Spleen (tissue), 13 donors: ENCODE measurements at regions of chr1 and their contacts with region 1.

Region 1: GRCh38 chr1:228734881-228735801 is at the start of gene RHOU:
- DNase-seq: peak; percentile 93
- H3K4me3 ChIP-seq: peak within 1 kb of the TSS; percentile 54 to 82 (median 70)
- H3K27ac ChIP-seq: peak within 1 kb of the TSS; percentile 80 to 94 (median 91)
- H3K4me1 ChIP-seq: peaks cover 9 to 59% (median 34%) of the 10 kb centered on the region in 6 donors
- H3K27me3 ChIP-seq: peaks cover 0 to 41% (median 10%) of the 10 kb centered on the region in 7 donors
- CTCF ChIP-seq: peak in 10 of 11 experiments; percentile 5 to 95 (median 83)
- POLR2A ChIP-seq: peak in 1 of 3 donors; percentile 50
- total RNA-seq, gene RHOU: 18.9 to 55.7 (median 41.1) TPM

Region 2: DNA sequence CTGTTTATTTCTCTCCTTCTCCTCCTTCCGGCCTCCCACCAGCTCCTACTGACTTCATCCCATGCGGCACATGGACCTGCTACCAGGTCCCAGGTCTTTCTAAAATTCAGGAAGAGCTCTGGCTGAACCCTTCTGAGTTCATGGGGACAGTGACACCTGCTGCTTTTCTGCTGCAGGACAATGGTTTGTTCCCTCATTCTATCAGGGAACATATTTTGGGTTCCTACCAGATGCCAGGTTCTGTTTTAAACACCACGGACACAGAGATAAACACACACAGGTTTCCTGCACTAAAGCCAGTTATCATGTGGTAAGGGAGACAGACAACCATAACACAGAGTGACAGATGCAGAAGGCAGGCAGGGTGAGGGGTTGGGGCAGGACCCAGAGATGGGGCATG is 421.7 kb after region 1 on chr1:
- intact Hi-C with region 1: no loop called
- DNase-seq: no peak
- H3K4me3 ChIP-seq: no peak overlapping the region
- H3K27ac ChIP-seq: peak overlapping the region in 6 of 8 donors; percentile 53 to 79 (median 73)
- H3K4me1 ChIP-seq: peaks cover 3 to 58% (median 35%) of the 10 kb centered on the region in 6 donors
- H3K27me3 ChIP-seq: no peaks in the 10 kb centered on the region
- CTCF ChIP-seq: peak in 5 of 11 experiments; percentile 13 to 36 (median 26)
- POLR2A ChIP-seq: no peak

Region 3: GRCh38 chr1:229221104-229222019 is 486.2 kb after region 1 on chr1:
- intact Hi-C with region 1: loop called (anchors 5 kb)
- DNase-seq: no peak
- H3K4me3 ChIP-seq: no peak overlapping the region
- H3K27ac ChIP-seq: peak overlapping the region in 1 of 8 donors; percentile 33
- H3K4me1 ChIP-seq: peaks cover 0 to 12% (median 4%) of the 10 kb centered on the region in 6 donors
- H3K27me3 ChIP-seq: no peaks in the 10 kb centered on the region
- CTCF ChIP-seq: no peak
- POLR2A ChIP-seq: no peak